Right ventricle myocardium superior (tissue), 1 donor: ENCODE measurements at regions of chr14 and their contacts with region 1.

Region 1: GRCh38 chr14:70640938-70641547 is 673 bp upstream of the TTC9 start:
- DNase-seq: no peak
- ATAC-seq: peak; percentile 46

Region 2: GRCh38 chr14:70707138-70708038 is 66.3 kb after region 1 on chr14:
- intact Hi-C with region 1: loop called (anchors 10 kb)
- DNase-seq: no peak
- ATAC-seq: no peak